ENCODE measurements at regions of chr19 and their contacts with region 1.

Region 1: GRCh38 chr19:29873024-29873800 is 61.4 kb downstream of the CCNE1 start:
- DNase-seq: no peak
- H3K4me3 ChIP-seq: peak overlapping the region; percentile 30 to 43
- H3K27ac ChIP-seq: no peak overlapping the region
- H3K4me1 ChIP-seq: peaks cover 13% of the 10 kb centered on the region
- H3K27me3 ChIP-seq: no peaks in the 10 kb centered on the region
- CTCF ChIP-seq: peak; percentile 71 to 94 (median 81)
- POLR2A ChIP-seq: no peak

Region 2: DNA sequence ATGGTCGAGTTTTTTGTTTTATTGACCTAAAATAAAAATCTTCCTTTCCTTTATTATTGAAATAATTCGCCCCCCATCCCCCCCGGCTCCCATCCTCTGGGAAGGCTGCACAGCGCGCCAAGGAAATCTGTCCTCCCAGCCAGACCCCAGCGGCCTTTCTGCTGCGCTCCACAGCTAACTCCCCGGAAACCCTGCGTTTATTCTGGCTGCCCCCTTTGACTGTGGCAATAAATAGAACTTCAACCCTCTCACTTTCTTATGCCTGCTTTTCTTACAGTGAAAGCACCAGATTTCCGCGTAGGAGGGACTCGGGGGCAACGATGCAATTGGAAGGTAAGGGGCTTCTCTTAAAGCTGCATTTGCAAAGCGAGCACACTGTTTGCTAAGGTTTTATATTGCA is 148.5 kb before region 1 on chr19:
- intact Hi-C with region 1: loop called (anchors 5 kb)
- DNase-seq: no peak
- H3K4me3 ChIP-seq: peak overlapping the region in 1 of 2 donors; percentile 6
- H3K27ac ChIP-seq: no peak overlapping the region
- H3K4me1 ChIP-seq: peaks cover 11% of the 10 kb centered on the region
- H3K27me3 ChIP-seq: no peaks in the 10 kb centered on the region
- CTCF ChIP-seq: no peak
- POLR2A ChIP-seq: no peak

Region 3: DNA sequence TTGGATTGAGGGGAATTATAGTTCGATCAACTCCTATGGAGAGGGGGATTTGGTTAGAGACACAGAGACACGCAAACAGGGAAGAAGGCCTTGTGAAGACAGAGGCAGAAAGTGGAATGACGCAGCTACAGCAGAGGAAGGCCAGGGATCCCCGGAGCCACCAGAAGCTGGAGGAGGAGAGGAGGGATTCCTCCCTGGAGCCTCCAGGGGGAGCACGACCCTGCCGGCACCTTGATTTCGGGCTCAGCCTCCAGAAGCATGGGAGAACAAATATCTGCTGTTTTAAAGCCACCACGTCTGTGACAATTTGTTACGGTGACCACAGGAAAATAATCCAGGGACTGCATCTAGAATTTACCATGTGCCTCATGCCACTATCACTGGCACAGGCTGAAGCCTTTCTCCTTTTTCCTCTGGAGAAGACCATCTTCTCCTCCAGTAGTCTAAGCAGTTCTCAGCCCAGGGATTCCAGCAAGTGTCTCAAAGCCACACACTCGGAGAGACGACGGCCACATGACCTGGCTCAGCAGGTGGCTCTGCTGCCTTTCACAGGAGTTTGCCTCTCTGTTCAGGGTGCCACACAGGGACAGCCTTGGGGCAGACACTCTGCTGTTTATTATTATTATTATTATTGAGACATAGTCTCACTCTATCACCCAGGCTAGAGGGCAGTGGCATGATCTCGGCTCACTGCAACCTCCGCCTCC is 101.4 kb before region 1 on chr19:
- intact Hi-C with region 1: loop called (anchors 10 kb)
- DNase-seq: no peak
- H3K4me3 ChIP-seq: no peak overlapping the region
- H3K27ac ChIP-seq: no peak overlapping the region
- H3K4me1 ChIP-seq: no peaks in the 10 kb centered on the region
- H3K27me3 ChIP-seq: no peaks in the 10 kb centered on the region
- CTCF ChIP-seq: peak in 2 of 3 experiments; percentile 16 to 42
- POLR2A ChIP-seq: no peak